ENCODE measurements at regions of chr1 and their contacts with region 1.

Region 1: GRCh38 chr1:159798893-159799292 is 3.3 kb upstream of the FCRL6 start:
- H3K4me3 ChIP-seq: no peak overlapping the region
- H3K27ac ChIP-seq: no peak overlapping the region
- H3K4me1 ChIP-seq: no peaks in the 10 kb centered on the region
- CTCF ChIP-seq: peak; percentile 46; the same call in 1 of the 2 replicates

Region 2: GRCh38 chr1:159707472-159708260 is 91.2 kb before region 1 on chr1:
- CTCF ChIA-PET with region 1: no interaction called
- POLR2A ChIA-PET with region 1: no interaction called
- H3K4me3 ChIP-seq: no peak overlapping the region
- H3K27ac ChIP-seq: no peak overlapping the region
- H3K4me1 ChIP-seq: no peaks in the 10 kb centered on the region
- CTCF ChIP-seq: no peak

Region 3: DNA sequence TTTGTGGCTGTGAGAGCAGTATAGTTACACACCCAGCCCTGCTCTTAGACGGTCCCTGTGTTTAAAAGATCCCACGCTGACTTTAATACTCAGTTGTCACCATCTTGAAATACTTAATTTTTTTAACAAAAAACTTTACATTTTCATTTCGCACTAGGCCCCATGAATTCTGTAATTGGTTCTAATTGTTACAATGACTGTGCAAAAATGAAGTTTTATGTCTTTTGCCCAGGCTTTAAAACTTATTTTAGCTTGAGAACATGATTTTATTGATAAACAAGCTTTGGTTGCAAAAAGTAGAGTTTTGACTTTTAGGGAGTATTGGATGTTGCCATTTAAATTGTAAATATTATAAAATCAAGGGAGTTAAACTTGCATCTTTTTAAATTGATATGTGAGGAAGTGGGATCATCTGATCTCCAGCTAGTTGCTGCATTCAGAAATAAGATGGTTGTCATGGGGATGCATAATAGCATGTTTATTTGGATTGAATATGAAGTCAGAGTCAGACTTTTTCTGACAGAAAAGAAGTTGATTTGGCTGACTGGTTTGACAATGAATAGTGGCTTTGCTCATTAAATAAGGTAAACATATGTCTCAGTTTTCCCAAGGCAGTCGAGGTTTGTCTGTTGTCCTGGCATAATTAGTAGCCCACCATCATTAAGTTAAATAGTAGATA is 61.5 kb before region 1 on chr1:
- CTCF ChIA-PET with region 1: no interaction called
- POLR2A ChIA-PET with region 1: no interaction called
- H3K4me3 ChIP-seq: no peak overlapping the region
- H3K27ac ChIP-seq: no peak overlapping the region
- H3K4me1 ChIP-seq: no peaks in the 10 kb centered on the region
- CTCF ChIP-seq: no peak

Region 4: GRCh38 chr1:159775716-159776115 is 23.2 kb before region 1 on chr1:
- CTCF ChIA-PET with region 1: interaction called, 15 read pairs
- POLR2A ChIA-PET with region 1: no interaction called
- H3K4me3 ChIP-seq: no peak overlapping the region
- H3K27ac ChIP-seq: no peak overlapping the region
- H3K4me1 ChIP-seq: no peaks in the 10 kb centered on the region
- CTCF ChIP-seq: no peak

Region 5: GRCh38 chr1:159829273-159829634 is 30.4 kb after region 1 on chr1:
- CTCF ChIA-PET with region 1: interaction called, 24 read pairs
- POLR2A ChIA-PET with region 1: no interaction called
- H3K4me3 ChIP-seq: no peak overlapping the region
- H3K27ac ChIP-seq: no peak overlapping the region
- H3K4me1 ChIP-seq: no peaks in the 10 kb centered on the region
- CTCF ChIP-seq: peak; percentile 68

Region 6: GRCh38 chr1:159891275-159892157 is 92.6 kb after region 1 on chr1:
- CTCF ChIA-PET with region 1: interaction called, 415 read pairs
- POLR2A ChIA-PET with region 1: no interaction called
- H3K4me3 ChIP-seq: no peak overlapping the region
- H3K27ac ChIP-seq: no peak overlapping the region
- H3K4me1 ChIP-seq: no peaks in the 10 kb centered on the region
- CTCF ChIP-seq: peak; percentile 99

Region 7: GRCh38 chr1:160018900-160019299 is 220.0 kb after region 1 on chr1:
- CTCF ChIA-PET with region 1: interaction called, 13 read pairs
- POLR2A ChIA-PET with region 1: no interaction called
- H3K4me3 ChIP-seq: no peak overlapping the region
- H3K27ac ChIP-seq: no peak overlapping the region
- H3K4me1 ChIP-seq: peaks cover 15% of the 10 kb centered on the region
- CTCF ChIP-seq: no peak

Region 8: DNA sequence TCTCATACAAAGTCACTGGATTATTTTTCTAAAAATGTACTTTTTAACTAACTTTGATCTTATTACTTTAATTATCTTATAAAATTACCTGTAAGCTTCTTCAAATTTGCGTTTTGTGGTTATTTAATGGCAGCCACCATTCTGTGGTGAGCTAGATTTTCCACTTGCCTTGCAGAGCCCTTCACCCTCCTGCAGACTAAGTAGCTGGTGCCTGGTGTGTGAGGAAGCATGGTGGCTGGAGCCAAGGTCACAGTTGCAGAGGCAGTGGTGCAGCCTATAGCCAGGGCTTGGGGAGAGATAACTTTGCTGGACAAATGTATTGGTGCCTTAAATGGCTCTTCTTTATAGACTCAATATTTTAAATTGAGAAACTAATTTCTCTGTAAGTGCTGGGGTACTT is 791.6 kb after region 1 on chr1:
- CTCF ChIA-PET with region 1: no interaction called
- POLR2A ChIA-PET with region 1: no interaction called
- H3K4me3 ChIP-seq: no peak overlapping the region
- H3K27ac ChIP-seq: no peak overlapping the region
- H3K4me1 ChIP-seq: no peaks in the 10 kb centered on the region
- CTCF ChIP-seq: no peak

Measured in HEK293 (cell line).